ENCODE measurements at regions of chr12 and their contacts with region 1.

Region 1: GRCh38 chr12:46661110-46661845 is 164.5 kb downstream of the SLC38A4 start:
- DNase-seq: peak; percentile 41
- CTCF ChIP-seq: peak; percentile 66

Region 2: DNA sequence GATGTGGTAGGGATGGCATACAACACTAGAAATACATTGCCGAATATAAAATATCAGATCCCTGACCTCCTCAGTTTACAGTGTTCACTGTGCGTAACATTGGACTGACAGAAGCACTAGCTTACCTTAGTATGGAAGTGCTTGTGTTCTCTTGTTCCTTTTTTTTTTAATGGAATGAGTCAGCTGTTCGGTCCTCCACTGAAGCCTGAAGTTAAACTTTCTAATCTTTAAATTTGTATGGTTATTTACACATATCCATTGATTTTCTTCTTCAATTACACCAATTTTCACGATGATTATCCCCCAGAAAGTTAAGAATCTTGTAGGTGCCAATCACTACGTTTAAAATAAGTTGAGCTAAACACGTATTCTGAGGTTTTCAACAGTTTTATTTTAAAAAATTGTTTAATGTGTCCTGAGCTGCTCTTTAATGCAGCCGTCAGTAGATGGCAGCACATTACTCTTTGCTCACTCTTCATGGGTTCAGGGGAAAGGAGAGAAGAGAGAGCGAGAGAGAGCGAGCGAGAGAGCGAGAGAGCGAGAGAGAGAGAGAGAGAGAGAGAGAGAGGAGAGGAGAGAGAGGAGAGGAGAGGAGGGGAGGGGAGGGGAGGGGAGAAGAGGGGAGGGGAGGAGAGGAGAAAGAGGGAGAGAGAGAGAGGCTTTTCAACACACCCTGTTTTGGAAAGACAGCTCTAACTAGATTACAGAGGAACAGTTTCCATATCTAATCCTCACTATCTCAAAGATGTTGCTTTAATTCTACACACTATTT is 536.2 kb before region 1 on chr12:
- in situ Hi-C with region 1: loop called (anchors 10 kb)
- DNase-seq: peak; percentile 42
- CTCF ChIP-seq: peak; percentile 71

Region 3: GRCh38 chr12:46382964-46383653 is 278.2 kb before region 1 on chr12:
- in situ Hi-C with region 1: loop called (anchors 10 kb)
- DNase-seq: peak; percentile 90
- CTCF ChIP-seq: peak; percentile 32

Region 4: GRCh38 chr12:46573347-46573658 is 88.0 kb before region 1 on chr12:
- in situ Hi-C with region 1: no loop called
- DNase-seq: no peak
- CTCF ChIP-seq: no peak

Measured in GM13976 (cell line).